Naive thymus-derived CD4-positive, alpha-beta T cell (primary cell): ENCODE measurements at regions of chr7 and their contacts with region 1.

Region 1: DNA sequence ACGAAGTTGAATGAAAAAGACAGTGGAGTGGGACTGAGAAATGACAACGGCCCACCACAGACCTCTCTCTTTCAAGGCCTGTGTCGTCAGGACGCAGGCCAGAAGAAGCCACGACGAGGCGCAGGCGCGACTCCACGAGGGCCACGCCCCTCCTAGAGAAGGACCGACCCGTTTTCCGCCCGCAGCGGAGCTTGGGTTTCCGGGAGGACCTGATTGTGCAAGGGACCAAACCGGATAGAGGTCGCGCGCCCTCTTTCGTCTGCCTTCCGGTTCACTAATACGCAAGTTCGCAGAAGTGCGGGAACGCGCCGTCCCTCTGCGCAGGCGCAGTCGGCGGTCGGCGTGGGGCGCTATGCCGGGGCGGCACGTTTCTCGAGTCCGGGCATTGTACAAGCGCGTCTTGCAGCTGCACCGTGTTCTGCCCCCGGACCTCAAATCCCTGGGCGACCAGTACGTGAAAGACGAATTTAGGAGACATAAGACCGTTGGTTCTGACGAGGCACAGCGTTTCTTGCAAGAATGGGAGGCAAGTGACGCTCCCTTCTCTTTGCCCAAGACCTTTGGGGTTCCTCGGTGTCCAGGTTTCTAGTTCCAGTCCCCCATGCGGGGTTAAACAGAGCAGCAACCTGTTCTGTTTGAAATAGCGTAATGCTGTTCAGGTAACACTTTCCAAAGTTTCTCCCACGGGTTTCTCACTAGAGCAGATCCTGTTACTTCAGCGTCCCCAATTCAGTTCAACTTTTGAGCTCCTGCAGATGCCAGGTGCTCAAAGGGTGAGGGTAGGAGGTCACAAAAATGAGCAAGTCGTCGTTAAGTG is at the start of gene SDHAF3:
- DNase-seq: peak; percentile 97 to 98 (median 98)
- ATAC-seq: peak; percentile 98
- H3K4me3 ChIP-seq: peak within 1 kb of the TSS; percentile 90
- H3K4me3 Mint-ChIP-seq: peak within 1 kb of the TSS; percentile 87 to 98 (median 96)
- H3K27ac ChIP-seq: peak within 1 kb of the TSS; percentile 71
- H3K27ac Mint-ChIP-seq: peak within 1 kb of the TSS; percentile 87 to 97 (median 94)
- H3K4me1 ChIP-seq: peaks cover 7 to 15% of the 10 kb centered on the region in 2 donors
- H3K4me1 Mint-ChIP-seq: peaks cover 17 to 67% (median 57%) of the 10 kb centered on the region in 7 donors
- H3K27me3 ChIP-seq: no peaks in the 10 kb centered on the region
- H3K27me3 Mint-ChIP-seq: peaks cover 0 to 2% (median 0%) of the 10 kb centered on the region in 5 donors
- total RNA-seq, gene SDHAF3: 8.4 to 16.5 (median 14.3) TPM

Region 2: DNA sequence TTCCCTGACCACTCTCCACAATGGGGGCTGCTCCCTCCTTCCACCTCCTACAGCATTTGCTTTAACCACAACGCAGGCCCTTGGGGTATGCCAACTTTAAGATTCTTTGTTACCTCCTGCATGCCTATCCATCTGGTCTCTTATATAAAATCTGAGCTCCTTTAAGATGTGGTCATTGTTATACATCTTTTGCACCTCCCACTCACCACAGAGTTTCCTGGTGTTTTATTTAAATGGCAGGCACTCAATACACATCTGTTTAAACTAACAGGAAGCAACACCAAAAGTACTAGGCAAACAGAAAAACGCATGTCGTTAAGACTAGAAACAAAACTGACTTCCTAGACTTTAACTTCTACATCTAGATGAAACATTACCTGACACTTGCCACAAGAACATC is 832.0 kb before region 1 on chr7:
- CTCF ChIA-PET with region 1: no interaction called
- POLR2A ChIA-PET with region 1: no interaction called
- intact Hi-C with region 1: loop called in 1 of 2 experiments (anchors 2 kb)
- DNase-seq: peak in 8 of 9 donors; percentile 26 to 85 (median 78)
- ATAC-seq: peak; percentile 95
- H3K4me3 ChIP-seq: peak overlapping the region; percentile 3
- H3K4me3 Mint-ChIP-seq: peak overlapping the region; percentile 48 to 87 (median 74)
- H3K27ac ChIP-seq: peak overlapping the region; percentile 41
- H3K27ac Mint-ChIP-seq: peak overlapping the region; percentile 81 to 99 (median 94)
- H3K4me1 ChIP-seq: peaks cover 21 to 25% of the 10 kb centered on the region in 2 donors
- H3K4me1 Mint-ChIP-seq: peaks cover 29 to 56% (median 46%) of the 10 kb centered on the region in 7 donors
- H3K27me3 ChIP-seq: no peaks in the 10 kb centered on the region
- H3K27me3 Mint-ChIP-seq: no peaks in the 10 kb centered on the region

Region 3: GRCh38 chr7:96709381-96710228 is 408.0 kb before region 1 on chr7 and contains the start of gene SEM1:
- CTCF ChIA-PET with region 1: no interaction called
- POLR2A ChIA-PET with region 1: no interaction called
- intact Hi-C with region 1: loop called (anchors 1 to 2 kb)
- DNase-seq: peak; percentile 20 to 65 (median 53)
- ATAC-seq: peak; percentile 88
- H3K4me3 ChIP-seq: peak within 1 kb of the TSS; percentile 70
- H3K4me3 Mint-ChIP-seq: peak within 1 kb of the TSS; percentile 96 to 100 (median 100)
- H3K27ac ChIP-seq: peak within 1 kb of the TSS; percentile 74
- H3K27ac Mint-ChIP-seq: peak within 1 kb of the TSS; percentile 88 to 100 (median 97)
- H3K4me1 ChIP-seq: peaks cover 13 to 14% of the 10 kb centered on the region in 2 donors
- H3K4me1 Mint-ChIP-seq: peaks cover 16 to 52% (median 42%) of the 10 kb centered on the region in 7 donors
- H3K27me3 ChIP-seq: no peaks in the 10 kb centered on the region
- H3K27me3 Mint-ChIP-seq: peaks cover 0 to 9% (median 8%) of the 10 kb centered on the region in 5 donors
- total RNA-seq, gene SEM1: 15.4 to 46.6 (median 28.3) TPM

Region 4: GRCh38 chr7:97138830-97139229 is 21.2 kb after region 1 on chr7:
- CTCF ChIA-PET with region 1: no interaction called
- POLR2A ChIA-PET with region 1: no interaction called
- intact Hi-C with region 1: no loop called
- DNase-seq: no peak
- ATAC-seq: no peak
- H3K4me3 ChIP-seq: no peak overlapping the region
- H3K4me3 Mint-ChIP-seq: no peak overlapping the region
- H3K27ac ChIP-seq: no peak overlapping the region
- H3K27ac Mint-ChIP-seq: no peak overlapping the region
- H3K4me1 ChIP-seq: no peaks in the 10 kb centered on the region
- H3K4me1 Mint-ChIP-seq: peaks cover 0 to 17% (median 9%) of the 10 kb centered on the region in 7 donors
- H3K27me3 ChIP-seq: no peaks in the 10 kb centered on the region
- H3K27me3 Mint-ChIP-seq: no peaks in the 10 kb centered on the region

Region 5: GRCh38 chr7:97872025-97872669 is 754.6 kb after region 1 on chr7 and contains the start of gene ASNS:
- CTCF ChIA-PET with region 1: no interaction called
- POLR2A ChIA-PET with region 1: interaction called, 6 read pairs
- intact Hi-C with region 1: loop called (anchors 1 kb)
- DNase-seq: peak; percentile 59 to 92 (median 82)
- ATAC-seq: peak; percentile 92
- H3K4me3 ChIP-seq: peak within 1 kb of the TSS; percentile 79
- H3K4me3 Mint-ChIP-seq: peak within 1 kb of the TSS; percentile 87 to 92 (median 91)
- H3K27ac ChIP-seq: peak within 1 kb of the TSS; percentile 76
- H3K27ac Mint-ChIP-seq: peak within 1 kb of the TSS; percentile 66 to 93 (median 91)
- H3K4me1 ChIP-seq: peaks cover 0 to 15% of the 10 kb centered on the region in 2 donors
- H3K4me1 Mint-ChIP-seq: peaks cover 9 to 26% (median 15%) of the 10 kb centered on the region in 7 donors
- H3K27me3 ChIP-seq: no peaks in the 10 kb centered on the region
- H3K27me3 Mint-ChIP-seq: no peaks in the 10 kb centered on the region
- total RNA-seq, gene ASNS: 23.1 to 49.3 (median 31.8) TPM

Region 6: DNA sequence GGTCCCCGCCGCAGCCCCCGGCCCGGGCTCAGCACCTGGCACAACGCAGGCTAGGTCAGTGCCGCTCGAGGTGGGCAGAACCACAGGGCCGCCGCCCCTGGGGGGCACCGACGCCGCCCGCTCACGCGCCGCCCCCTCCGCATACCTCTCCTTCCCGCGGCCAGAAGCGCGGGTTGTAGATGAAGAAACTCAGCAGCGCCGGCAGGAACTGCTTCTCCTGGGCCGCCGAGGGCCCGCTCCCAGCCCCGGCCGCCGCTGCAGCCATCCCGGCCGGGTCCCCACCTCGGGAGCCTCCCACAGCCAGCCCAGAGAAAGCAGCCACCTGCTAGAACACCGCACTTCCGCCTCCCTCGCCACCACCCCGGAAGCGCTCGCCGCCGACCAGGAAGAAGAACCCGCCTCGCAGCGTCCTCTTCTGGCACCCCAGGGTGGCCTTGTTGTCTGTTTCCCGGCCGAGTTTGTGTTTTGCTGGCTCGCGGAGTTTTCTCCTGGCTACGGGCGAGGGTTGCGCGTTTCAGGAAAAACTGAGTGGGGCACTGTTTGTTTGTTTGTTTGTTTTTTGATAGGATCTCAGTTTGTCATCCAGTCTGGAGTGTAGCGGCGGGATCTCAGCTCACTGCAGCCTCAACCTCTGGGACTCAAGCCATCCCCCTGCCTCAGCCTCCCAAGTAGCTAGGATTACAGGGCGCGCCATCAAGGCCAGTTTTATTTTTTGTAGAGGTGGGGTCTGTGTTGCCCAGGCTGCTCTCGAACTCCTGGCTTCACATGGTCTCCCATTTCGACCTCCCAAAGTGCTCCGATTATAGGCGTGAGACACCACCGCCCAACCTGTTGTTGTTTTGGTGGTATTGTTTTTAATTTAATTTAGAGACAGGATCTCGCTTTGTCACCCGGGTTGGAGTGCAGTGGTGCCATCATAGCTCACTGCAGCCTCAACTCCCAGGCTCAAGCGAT is 854.7 kb after region 1 on chr7:
- CTCF ChIA-PET with region 1: no interaction called
- POLR2A ChIA-PET with region 1: no interaction called
- intact Hi-C with region 1: loop called in 1 of 2 experiments (anchors 1 kb)
- DNase-seq: peak; percentile 68 to 86 (median 83)
- ATAC-seq: peak; percentile 94
- H3K4me3 ChIP-seq: peak overlapping the region; percentile 87
- H3K4me3 Mint-ChIP-seq: peak overlapping the region; percentile 90 to 98 (median 96)
- H3K27ac ChIP-seq: peak overlapping the region; percentile 84
- H3K27ac Mint-ChIP-seq: peak overlapping the region; percentile 94 to 97 (median 96)
- H3K4me1 ChIP-seq: peaks cover 10% of the 10 kb centered on the region in 2 donors
- H3K4me1 Mint-ChIP-seq: peaks cover 5 to 37% (median 17%) of the 10 kb centered on the region in 7 donors
- H3K27me3 ChIP-seq: no peaks in the 10 kb centered on the region
- H3K27me3 Mint-ChIP-seq: peaks cover 0 to 3% (median 0%) of the 10 kb centered on the region in 5 donors

Region 7: GRCh38 chr7:98106647-98107445 is 989.3 kb after region 1 on chr7 and contains the start of gene LMTK2:
- CTCF ChIA-PET with region 1: no interaction called
- POLR2A ChIA-PET with region 1: no interaction called
- intact Hi-C with region 1: loop called in 1 of 2 experiments (anchors 1 kb)
- DNase-seq: peak; percentile 92 to 100 (median 97)
- ATAC-seq: peak; percentile 100
- H3K4me3 ChIP-seq: peak within 1 kb of the TSS; percentile 66
- H3K4me3 Mint-ChIP-seq: peak within 1 kb of the TSS; percentile 90 to 99 (median 96)
- H3K27ac ChIP-seq: peak within 1 kb of the TSS; percentile 92
- H3K27ac Mint-ChIP-seq: peak within 1 kb of the TSS; percentile 22 to 97 (median 89)
- H3K4me1 ChIP-seq: peaks cover 10 to 26% of the 10 kb centered on the region in 2 donors
- H3K4me1 Mint-ChIP-seq: peaks cover 23 to 51% (median 48%) of the 10 kb centered on the region in 7 donors
- H3K27me3 ChIP-seq: no peaks in the 10 kb centered on the region
- H3K27me3 Mint-ChIP-seq: peaks cover 0 to 12% (median 7%) of the 10 kb centered on the region in 5 donors
- total RNA-seq, gene LMTK2: 13.2 to 29.1 (median 25.9) TPM

Region 8: DNA sequence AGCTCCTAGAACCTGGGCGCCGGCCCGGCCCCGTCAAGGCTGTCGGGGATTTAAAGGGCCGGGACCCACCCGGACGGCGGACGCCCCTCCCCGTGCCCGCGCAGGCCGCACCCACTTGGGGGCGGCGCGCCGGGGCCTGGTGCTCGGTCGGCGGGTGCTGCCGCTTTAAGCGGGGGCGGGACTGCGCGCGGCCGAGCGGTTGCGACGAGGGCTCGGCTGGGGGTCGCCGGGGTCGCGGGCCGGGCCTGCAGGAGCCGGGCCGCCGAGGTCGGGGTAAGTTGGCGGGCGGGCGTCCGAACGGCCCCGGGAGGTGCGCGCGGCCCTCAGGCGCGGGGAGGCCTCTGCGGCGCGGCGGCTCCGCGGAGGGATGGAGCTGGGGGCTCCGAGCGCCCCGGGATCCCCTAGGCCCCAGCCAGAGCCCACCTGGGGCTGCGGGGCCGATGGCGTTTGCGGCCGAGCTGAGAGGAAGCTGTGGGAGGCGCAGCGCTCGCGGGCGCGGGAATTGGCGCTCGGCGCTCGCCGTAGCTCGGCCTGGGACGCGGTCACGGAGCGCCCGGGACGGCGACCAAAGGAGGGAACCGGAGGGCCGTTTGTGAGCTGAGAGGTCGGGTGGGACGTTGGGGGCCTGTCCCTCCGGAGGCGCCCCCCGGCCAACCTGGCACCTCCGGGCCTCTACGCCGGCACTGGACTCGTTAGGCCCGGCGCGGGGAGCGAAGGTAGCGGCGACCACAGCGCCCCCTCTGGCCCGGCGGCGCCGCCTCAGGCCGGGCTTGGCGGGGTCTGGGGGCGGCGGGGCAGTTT is 1761.0 kb after region 1 on chr7 and contains the start of gene TRRAP:
- CTCF ChIA-PET with region 1: no interaction called
- POLR2A ChIA-PET with region 1: no interaction called
- intact Hi-C with region 1: loop called (anchors 2 to 5 kb)
- DNase-seq: peak; percentile 63 to 87 (median 82)
- ATAC-seq: peak; percentile 82
- H3K4me3 ChIP-seq: peak within 1 kb of the TSS; percentile 95
- H3K4me3 Mint-ChIP-seq: peak within 1 kb of the TSS; percentile 90 to 99 (median 95)
- H3K27ac ChIP-seq: peak within 1 kb of the TSS; percentile 88
- H3K27ac Mint-ChIP-seq: peak within 1 kb of the TSS; percentile 87 to 98 (median 94)
- H3K4me1 ChIP-seq: peaks cover 9 to 14% of the 10 kb centered on the region in 2 donors
- H3K4me1 Mint-ChIP-seq: peaks cover 0 to 37% (median 26%) of the 10 kb centered on the region in 7 donors
- H3K27me3 ChIP-seq: no peaks in the 10 kb centered on the region
- H3K27me3 Mint-ChIP-seq: peaks cover 0 to 3% (median 0%) of the 10 kb centered on the region in 5 donors
- total RNA-seq, gene TRRAP: 59.1 to 72.3 (median 66.8) TPM